Right ventricle myocardium inferior (tissue), 1 donor: ENCODE measurements at regions of chr9 and their contacts with region 1.

Region 1: DNA sequence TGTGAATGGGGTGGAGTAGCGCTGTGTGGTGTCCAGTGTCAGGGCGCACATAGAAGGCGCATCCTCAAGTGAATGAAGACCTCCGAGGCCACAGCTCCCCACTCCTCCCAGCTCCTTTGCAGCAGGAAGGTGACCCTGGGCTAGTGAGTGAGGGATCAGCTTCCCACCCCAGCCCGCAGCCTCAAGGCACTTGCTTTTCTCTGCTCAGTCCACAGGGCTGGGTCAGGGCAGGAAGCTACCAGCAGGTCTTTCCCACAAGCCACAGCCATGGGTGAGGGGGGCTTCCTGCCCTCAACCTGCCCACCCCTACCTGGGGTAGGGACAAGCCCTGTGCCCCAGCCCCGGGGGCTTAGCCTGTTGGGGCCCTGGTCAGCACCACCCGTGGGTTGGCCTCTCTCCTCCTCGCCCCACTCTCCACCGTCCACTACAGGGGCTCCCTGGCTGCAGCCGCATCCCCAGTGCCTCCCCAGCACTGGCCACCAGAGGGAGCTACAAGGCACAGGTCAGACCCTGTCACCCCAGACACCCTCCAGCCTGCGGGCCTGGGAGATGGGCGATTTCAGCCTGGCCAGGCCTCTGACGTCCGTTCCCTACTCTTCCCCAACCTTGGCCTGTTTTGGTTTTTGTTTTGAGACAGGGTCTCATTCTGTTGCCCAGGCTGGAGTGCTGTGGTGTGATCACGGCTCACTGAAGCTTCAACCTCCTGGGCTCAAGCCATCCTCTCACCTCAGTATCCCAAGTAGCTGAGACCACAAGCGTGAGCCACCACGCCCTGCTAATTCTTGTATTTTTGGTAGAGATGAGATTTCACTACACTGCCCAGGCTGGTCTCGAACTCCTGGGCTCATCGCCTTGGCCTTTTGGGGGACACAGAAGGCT is 1.3 kb upstream of the ABCA2 start:
- DNase-seq: peak; percentile 93
- ATAC-seq: peak; percentile 80

Region 2: DNA sequence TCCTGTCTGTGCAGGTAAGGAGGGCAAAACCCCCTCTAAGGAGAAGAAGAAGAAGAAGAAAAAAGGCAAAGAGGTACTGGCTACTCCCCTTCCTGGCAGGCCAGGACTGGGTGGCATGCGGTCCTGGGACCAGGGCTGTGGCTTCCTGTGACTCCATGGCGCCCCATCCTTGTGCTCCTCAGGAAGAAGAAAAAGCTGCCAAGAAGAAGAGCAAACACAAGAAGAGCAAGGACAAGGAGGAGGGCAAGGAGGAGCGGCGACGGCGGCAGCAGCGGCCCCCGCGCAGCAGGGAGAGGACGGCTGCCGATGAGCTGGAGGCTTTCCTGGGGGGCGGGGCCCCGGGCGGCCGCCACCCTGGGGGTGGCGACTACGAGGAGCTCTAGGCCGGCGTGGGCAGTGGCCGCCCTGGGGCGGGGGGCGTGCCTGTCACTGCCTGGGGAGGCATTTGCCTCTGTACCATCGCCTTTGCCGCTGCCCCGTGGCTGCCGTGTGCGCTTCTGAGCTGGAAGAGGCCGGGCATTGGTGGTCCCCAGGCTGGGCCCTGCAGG is 189.1 kb before region 1 on chr9:
- intact Hi-C with region 1: loop called (anchors 5 kb)
- DNase-seq: no peak
- ATAC-seq: no peak

Region 3: GRCh38 chr9:137046098-137046787 is 16.9 kb after region 1 on chr9 and contains the start of gene NPDC1:
- intact Hi-C with region 1: no loop called
- DNase-seq: peak; percentile 88
- ATAC-seq: peak; percentile 68
- total RNA-seq, gene NPDC1: 69.0 TPM